ENCODE measurements at regions of chr13 and their contacts with region 1.

Region 1: GRCh38 chr13:99269627-99270241 is 11.6 kb upstream of the GPR18 start:
- DNase-seq: peak in 2 of 5 donors; percentile 56 to 77
- H3K4me3 ChIP-seq: no peak overlapping the region
- H3K27ac ChIP-seq: no peak overlapping the region
- H3K4me1 ChIP-seq: peaks cover 0 to 5% (median 0%) of the 10 kb centered on the region in 3 donors
- H3K27me3 ChIP-seq: no peaks in the 10 kb centered on the region
- CTCF ChIP-seq: peak; percentile 71

Region 2: GRCh38 chr13:99436686-99437416 is 167.1 kb after region 1 on chr13:
- intact Hi-C with region 1: loop called (anchors 5 kb)
- DNase-seq: peak; percentile 89 to 92 (median 91)
- H3K4me3 ChIP-seq: peak overlapping the region; percentile 10 to 37 (median 23)
- H3K27ac ChIP-seq: no peak overlapping the region
- H3K4me1 ChIP-seq: peaks cover 0 to 8% (median 0%) of the 10 kb centered on the region in 3 donors
- H3K27me3 ChIP-seq: no peaks in the 10 kb centered on the region
- CTCF ChIP-seq: peak; percentile 99

Measured in kidney (tissue), 22 donors.